Mammary epithelial cell (primary cell): ENCODE measurements at regions of chr15 and their contacts with region 1.

Region 1: GRCh38 chr15:42329161-42329560 is 30.1 kb upstream of the CAPN3 start:
- DNase-seq: no peak
- H3K4me3 ChIP-seq: no peak overlapping the region
- H3K27ac ChIP-seq: no peak overlapping the region
- H3K4me1 ChIP-seq: no peaks in the 10 kb centered on the region
- H3K27me3 ChIP-seq: no peaks in the 10 kb centered on the region
- CTCF ChIP-seq: no peak

Region 2: GRCh38 chr15:42273102-42273899 is 55.9 kb before region 1 on chr15 and contains the starts of genes GANC and TMEM87A:
- CTCF ChIA-PET with region 1: no interaction called
- dilution Hi-C with region 1: loop called (anchors 5 kb)
- in situ Hi-C with region 1: no loop called
- intact Hi-C with region 1: no loop called
- DNase-seq: peak; percentile 98
- H3K4me3 ChIP-seq: peak within 1 kb of the TSS; percentile 72 to 90 (median 78)
- H3K27ac ChIP-seq: peak within 1 kb of the TSS; percentile 99
- H3K4me1 ChIP-seq: peaks cover 15% of the 10 kb centered on the region
- H3K27me3 ChIP-seq: no peaks in the 10 kb centered on the region
- CTCF ChIP-seq: no peak
- total RNA-seq, gene GANC: 34.0 to 45.7 TPM
- total RNA-seq, gene TMEM87A: 56.3 to 103 TPM